ENCODE measurements at regions of chr15 and their contacts with region 1.

Region 1: DNA sequence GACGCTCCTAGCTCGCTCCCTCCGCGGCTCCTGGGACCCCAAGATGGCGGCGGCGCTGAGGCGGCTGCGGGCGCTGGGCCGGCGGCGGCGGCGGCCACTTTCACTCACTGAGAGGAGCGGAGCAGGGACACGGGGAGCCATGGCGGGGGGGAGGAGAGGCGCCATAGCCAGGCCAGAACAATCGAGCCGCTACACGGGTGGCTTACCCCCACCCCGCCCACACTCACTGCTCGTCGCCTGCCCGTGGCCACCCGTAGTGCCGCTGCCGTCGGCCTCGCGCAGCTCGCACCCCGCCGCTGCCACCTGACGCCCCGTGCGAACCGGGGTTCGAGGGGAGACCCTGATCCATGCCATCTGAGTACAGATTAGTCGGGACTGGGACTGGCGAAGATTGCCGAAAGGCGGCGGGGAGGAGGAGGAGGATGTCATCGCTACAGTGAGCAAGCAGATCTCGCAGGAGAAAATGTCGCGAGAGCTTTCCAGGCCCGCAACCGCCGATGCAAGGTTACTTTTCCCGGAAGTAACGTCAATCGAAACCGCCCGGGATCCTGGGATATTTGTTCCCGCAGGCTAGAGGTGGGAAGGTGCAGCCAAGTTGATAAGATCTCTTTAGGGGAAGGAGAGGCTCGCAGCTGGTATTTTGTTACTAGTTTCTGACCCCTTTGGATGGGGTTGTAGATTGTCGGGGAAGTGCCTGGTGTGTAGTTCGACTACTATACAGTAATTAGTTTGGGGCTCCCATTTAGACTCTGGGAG is at the start of gene INO80:
- DNase-seq: peak; percentile 90 to 98 (median 96)
- ATAC-seq: peak; percentile 74
- H3K4me3 ChIP-seq: peak within 1 kb of the TSS; percentile 68 to 98
- H3K4me3 Mint-ChIP-seq: peak within 1 kb of the TSS; percentile 96
- H3K27ac ChIP-seq: peak within 1 kb of the TSS; percentile 83 to 96
- H3K27ac Mint-ChIP-seq: peak within 1 kb of the TSS; percentile 99
- H3K4me1 ChIP-seq: peaks cover 15% of the 10 kb centered on the region
- H3K4me1 Mint-ChIP-seq: peaks cover 28% of the 10 kb centered on the region
- H3K27me3 ChIP-seq: no peaks in the 10 kb centered on the region
- H3K27me3 Mint-ChIP-seq: no peaks in the 10 kb centered on the region
- CTCF ChIP-seq: no peak
- total RNA-seq, gene INO80: 19.7 to 24.2 TPM

Region 2: GRCh38 chr15:39782441-39783138 is 1333.7 kb before region 1 on chr15 and contains the start of gene FSIP1:
- CTCF ChIA-PET with region 1: no interaction called
- POLR2A ChIA-PET with region 1: no interaction called
- intact Hi-C with region 1: loop called in 1 of 2 experiments (anchors 5 kb)
- DNase-seq: peak; percentile 91 to 97 (median 94)
- ATAC-seq: peak; percentile 98
- H3K4me3 ChIP-seq: peak within 1 kb of the TSS; percentile 71 to 95
- H3K4me3 Mint-ChIP-seq: peak within 1 kb of the TSS; percentile 85
- H3K27ac ChIP-seq: peak within 1 kb of the TSS; percentile 68 to 82
- H3K27ac Mint-ChIP-seq: peak within 1 kb of the TSS; percentile 87
- H3K4me1 ChIP-seq: peaks cover 20% of the 10 kb centered on the region
- H3K4me1 Mint-ChIP-seq: peaks cover 50% of the 10 kb centered on the region
- H3K27me3 ChIP-seq: no peaks in the 10 kb centered on the region
- H3K27me3 Mint-ChIP-seq: no peaks in the 10 kb centered on the region
- CTCF ChIP-seq: no peak
- total RNA-seq, gene FSIP1: 0.22 to 0.64 TPM

Region 3: GRCh38 chr15:40593588-40594428 is 522.5 kb before region 1 on chr15 and contains the start of gene KNL1:
- CTCF ChIA-PET with region 1: no interaction called
- POLR2A ChIA-PET with region 1: no interaction called
- intact Hi-C with region 1: loop called in 1 of 2 experiments (anchors 5 kb)
- DNase-seq: peak; percentile 70 to 96 (median 85)
- ATAC-seq: peak; percentile 83
- H3K4me3 ChIP-seq: peak within 1 kb of the TSS; percentile 76 to 82
- H3K4me3 Mint-ChIP-seq: peak within 1 kb of the TSS; percentile 95
- H3K27ac ChIP-seq: peak within 1 kb of the TSS; percentile 78 to 92
- H3K27ac Mint-ChIP-seq: peak within 1 kb of the TSS; percentile 98
- H3K4me1 ChIP-seq: no peaks in the 10 kb centered on the region
- H3K4me1 Mint-ChIP-seq: peaks cover 20% of the 10 kb centered on the region
- H3K27me3 ChIP-seq: peaks cover 0 to 2% of the 10 kb centered on the region in 2 experiments
- H3K27me3 Mint-ChIP-seq: peaks cover 6% of the 10 kb centered on the region
- CTCF ChIP-seq: no peak
- total RNA-seq, gene KNL1: 0.83 to 0.98 TPM

Region 4: GRCh38 chr15:40906091-40906990 is 210.0 kb before region 1 on chr15:
- CTCF ChIA-PET with region 1: interaction called, 8 read pairs
- POLR2A ChIA-PET with region 1: interaction called, 3 read pairs
- intact Hi-C with region 1: loop called (anchors 1 to 5 kb)
- DNase-seq: peak; percentile 50 to 84 (median 76)
- ATAC-seq: peak; percentile 63
- H3K4me3 ChIP-seq: peak overlapping the region; percentile 68 to 80
- H3K4me3 Mint-ChIP-seq: peak overlapping the region; percentile 83
- H3K27ac ChIP-seq: peak overlapping the region; percentile 19 to 82
- H3K27ac Mint-ChIP-seq: peak overlapping the region; percentile 87
- H3K4me1 ChIP-seq: peaks cover 18% of the 10 kb centered on the region
- H3K4me1 Mint-ChIP-seq: peaks cover 38% of the 10 kb centered on the region
- H3K27me3 ChIP-seq: no peaks in the 10 kb centered on the region
- H3K27me3 Mint-ChIP-seq: no peaks in the 10 kb centered on the region
- CTCF ChIP-seq: peak; percentile 85

Region 5: DNA sequence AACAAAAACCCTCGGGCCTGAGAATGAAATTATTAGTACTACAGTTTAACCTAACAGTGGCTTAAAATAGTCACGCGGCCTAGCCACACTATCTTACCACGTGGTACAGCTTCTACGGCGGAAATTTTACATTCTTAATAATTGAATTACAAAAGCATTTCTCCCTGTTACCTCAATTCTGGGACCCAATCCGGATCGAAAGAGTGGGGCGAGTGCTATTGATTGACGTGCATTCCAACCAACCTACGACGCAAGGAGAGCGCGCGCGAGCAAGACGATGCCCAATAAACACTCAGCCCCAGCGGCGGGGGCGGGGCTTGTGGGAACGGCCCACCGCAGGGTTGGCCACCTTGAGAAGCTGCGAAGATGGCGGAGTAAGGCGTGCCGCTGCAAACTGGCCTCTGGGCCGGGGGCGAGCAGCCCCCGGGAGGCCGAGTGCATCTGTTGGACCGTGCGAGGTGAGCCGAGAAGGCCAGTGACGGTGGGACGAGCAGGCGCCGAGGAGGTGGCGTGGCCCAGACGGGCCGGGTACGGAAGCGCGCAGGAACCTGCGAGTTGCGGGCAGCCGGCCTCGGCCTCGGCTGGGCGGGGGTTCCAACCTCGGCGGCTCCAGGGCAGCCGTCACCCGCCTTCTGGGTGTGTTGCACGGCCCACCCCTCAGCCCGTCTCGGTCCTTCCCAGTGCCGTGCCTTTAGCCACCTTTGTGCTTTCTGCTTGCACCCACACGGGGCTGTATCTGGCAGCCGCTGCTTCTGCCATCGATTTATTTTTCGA is 167.5 kb after region 1 on chr15:
- CTCF ChIA-PET with region 1: no interaction called
- POLR2A ChIA-PET with region 1: interaction called, 3 read pairs
- intact Hi-C with region 1: loop called (anchors 1 to 5 kb)
- DNase-seq: peak; percentile 94 to 100 (median 97)
- ATAC-seq: peak; percentile 96
- H3K4me3 ChIP-seq: peak overlapping the region; percentile 70 to 86
- H3K4me3 Mint-ChIP-seq: peak overlapping the region; percentile 89
- H3K27ac ChIP-seq: peak overlapping the region; percentile 91 to 93
- H3K27ac Mint-ChIP-seq: peak overlapping the region; percentile 95
- H3K4me1 ChIP-seq: peaks cover 25% of the 10 kb centered on the region
- H3K4me1 Mint-ChIP-seq: peaks cover 48% of the 10 kb centered on the region
- H3K27me3 ChIP-seq: no peaks in the 10 kb centered on the region
- H3K27me3 Mint-ChIP-seq: no peaks in the 10 kb centered on the region
- CTCF ChIP-seq: no peak

Region 6: GRCh38 chr15:41416742-41417406 is 300.6 kb after region 1 on chr15 and contains the start of gene RTF1:
- CTCF ChIA-PET with region 1: no interaction called
- POLR2A ChIA-PET with region 1: no interaction called
- intact Hi-C with region 1: loop called in 1 of 2 experiments (anchors 5 kb)
- DNase-seq: peak; percentile 94 to 99 (median 98)
- ATAC-seq: peak; percentile 98
- H3K4me3 ChIP-seq: peak within 1 kb of the TSS; percentile 79 to 91
- H3K4me3 Mint-ChIP-seq: peak within 1 kb of the TSS; percentile 93
- H3K27ac ChIP-seq: peak within 1 kb of the TSS; percentile 64 to 76
- H3K27ac Mint-ChIP-seq: peak within 1 kb of the TSS; percentile 94
- H3K4me1 ChIP-seq: peaks cover 30% of the 10 kb centered on the region
- H3K4me1 Mint-ChIP-seq: peaks cover 43% of the 10 kb centered on the region
- H3K27me3 ChIP-seq: no peaks in the 10 kb centered on the region
- H3K27me3 Mint-ChIP-seq: no peaks in the 10 kb centered on the region
- CTCF ChIP-seq: no peak
- total RNA-seq, gene RTF1: 33.2 to 41.6 TPM